Heart right ventricle (tissue), 16 donors: ENCODE measurements at regions of chr2 and their contacts with region 1.

Region 1: DNA sequence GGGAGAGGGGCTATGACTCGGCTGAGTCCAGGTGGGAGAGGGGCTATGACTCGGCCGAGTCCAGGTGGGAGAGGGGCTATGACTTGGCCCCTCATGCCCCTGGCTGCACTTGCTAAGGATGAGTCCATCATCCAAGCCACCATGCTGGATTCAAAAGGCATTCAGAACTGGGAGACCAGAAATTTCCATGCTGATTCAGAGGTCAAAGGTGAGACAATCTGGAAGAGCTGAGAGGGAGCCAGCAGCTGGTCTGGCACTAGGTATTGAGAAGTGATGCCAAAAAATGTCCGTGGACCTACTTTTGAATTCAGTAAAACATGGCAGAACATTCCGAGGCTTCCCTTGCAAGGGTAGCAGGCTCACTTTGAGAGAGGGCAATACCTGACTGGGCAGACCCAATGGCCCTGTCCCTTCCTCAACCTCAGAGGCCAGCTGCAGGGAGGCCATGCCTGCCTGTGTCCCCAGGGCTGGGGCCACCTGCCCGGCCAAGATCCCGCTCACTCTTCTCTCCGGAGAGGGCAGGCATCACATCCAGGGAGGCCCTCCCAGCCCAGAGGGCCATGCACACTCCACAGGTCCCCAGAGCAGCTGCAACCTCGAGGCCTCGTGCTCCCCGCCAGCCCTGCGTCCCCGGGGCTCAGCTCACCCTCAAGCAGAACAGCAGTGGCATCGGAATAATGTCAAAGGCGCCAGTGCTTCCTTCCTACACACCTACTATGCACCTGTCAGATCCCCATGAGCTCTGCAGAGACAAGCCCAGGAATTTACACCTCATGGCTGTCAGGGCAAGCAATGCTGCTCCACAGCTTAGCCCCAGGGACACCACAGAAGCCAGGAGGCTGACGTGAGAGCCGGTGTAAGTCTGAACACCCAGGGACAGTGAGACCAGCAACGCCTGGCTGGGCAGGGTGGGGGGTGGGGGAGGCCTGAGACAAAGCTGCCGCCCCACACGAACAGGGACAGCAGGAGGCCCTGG is 80.2 kb upstream of the GPC1 start:
- DNase-seq: no peak
- ATAC-seq: no peak
- H3K4me3 ChIP-seq: no peak overlapping the region
- H3K27ac ChIP-seq: no peak overlapping the region
- H3K4me1 ChIP-seq: peaks cover 0 to 29% (median 3%) of the 10 kb centered on the region in 9 donors
- H3K27me3 ChIP-seq: peaks cover 0 to 2% (median 0%) of the 10 kb centered on the region in 7 donors
- CTCF ChIP-seq: no peak

Region 2: DNA sequence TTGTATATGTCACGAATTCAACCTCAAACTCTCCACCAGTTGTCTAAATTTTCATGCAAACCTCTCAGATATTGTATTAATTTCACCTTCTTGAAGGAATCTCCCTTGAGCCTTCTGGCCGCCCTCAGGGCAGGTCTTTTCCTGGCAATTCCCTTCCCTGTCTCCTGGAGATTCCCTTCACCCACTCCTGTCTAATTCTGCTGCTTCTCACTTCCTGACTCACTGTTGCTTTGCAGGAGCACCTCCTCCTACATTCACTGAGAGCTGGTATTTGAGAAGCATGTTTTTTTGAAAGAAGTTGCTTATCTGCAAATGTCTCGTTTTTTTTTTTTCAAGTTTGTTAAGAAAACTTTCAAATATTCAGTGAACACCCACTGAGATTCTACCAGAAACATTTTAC is 134.9 kb before region 1 on chr2:
- intact Hi-C with region 1: loop called in 1 of 10 experiments (anchors 5 kb)
- DNase-seq: no peak
- ATAC-seq: no peak
- H3K4me3 ChIP-seq: no peak overlapping the region
- H3K27ac ChIP-seq: no peak overlapping the region
- H3K4me1 ChIP-seq: no peaks in the 10 kb centered on the region
- H3K27me3 ChIP-seq: peaks cover 0 to 23% (median 11%) of the 10 kb centered on the region in 7 donors
- CTCF ChIP-seq: no peak

Region 3: GRCh38 chr2:240426797-240427721 is 71.8 kb after region 1 on chr2:
- intact Hi-C with region 1: loop called in 1 of 10 experiments (anchors 10 kb)
- DNase-seq: no peak
- ATAC-seq: no peak
- H3K4me3 ChIP-seq: no peak overlapping the region
- H3K27ac ChIP-seq: no peak overlapping the region
- H3K4me1 ChIP-seq: no peaks in the 10 kb centered on the region
- H3K27me3 ChIP-seq: peaks cover 0 to 6% (median 0%) of the 10 kb centered on the region in 7 donors
- CTCF ChIP-seq: no peak